Tibial artery (tissue), 4 donors: ENCODE measurements at regions of chr19 and their contacts with region 1.

Region 1: GRCh38 chr19:39846176-39846677 is at the start of gene FBL:
- DNase-seq: peak; percentile 93 to 97
- H3K4me3 ChIP-seq: peak within 1 kb of the TSS; percentile 81 to 93
- H3K27ac ChIP-seq: peak within 1 kb of the TSS; percentile 81 to 91
- H3K4me1 ChIP-seq: peaks cover 0 to 59% (median 29%) of the 10 kb centered on the region in 4 donors
- H3K27me3 ChIP-seq: no peaks in the 10 kb centered on the region
- CTCF ChIP-seq: no peak

Region 2: GRCh38 chr19:39645800-39646411 is 200.3 kb before region 1 on chr19:
- intact Hi-C with region 1: no loop called
- DNase-seq: no peak
- H3K4me3 ChIP-seq: no peak overlapping the region
- H3K27ac ChIP-seq: no peak overlapping the region
- H3K4me1 ChIP-seq: no peaks in the 10 kb centered on the region
- H3K27me3 ChIP-seq: no peaks in the 10 kb centered on the region
- CTCF ChIP-seq: no peak

Region 3: DNA sequence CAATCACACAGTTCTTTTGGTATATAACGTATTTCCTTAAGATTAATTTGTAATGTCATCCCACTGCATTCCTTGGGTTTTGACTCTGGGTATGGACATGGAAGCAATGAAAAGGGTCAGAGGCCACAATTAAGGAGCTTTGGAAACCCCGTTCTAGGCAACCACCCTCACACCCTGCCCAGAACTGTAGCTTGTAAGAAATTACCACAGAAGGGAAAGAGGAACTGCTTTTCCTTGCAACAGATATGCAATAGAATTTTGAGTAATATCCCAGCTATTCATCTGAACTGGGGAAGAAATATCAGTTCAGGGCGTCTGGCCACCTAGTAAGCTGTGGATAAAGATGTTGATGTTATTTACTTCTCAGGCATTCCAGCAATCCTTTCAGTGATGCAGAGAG is 107.4 kb before region 1 on chr19:
- intact Hi-C with region 1: no loop called
- DNase-seq: no peak
- H3K4me3 ChIP-seq: no peak overlapping the region
- H3K27ac ChIP-seq: no peak overlapping the region
- H3K4me1 ChIP-seq: no peaks in the 10 kb centered on the region
- H3K27me3 ChIP-seq: no peaks in the 10 kb centered on the region
- CTCF ChIP-seq: no peak

Region 4: DNA sequence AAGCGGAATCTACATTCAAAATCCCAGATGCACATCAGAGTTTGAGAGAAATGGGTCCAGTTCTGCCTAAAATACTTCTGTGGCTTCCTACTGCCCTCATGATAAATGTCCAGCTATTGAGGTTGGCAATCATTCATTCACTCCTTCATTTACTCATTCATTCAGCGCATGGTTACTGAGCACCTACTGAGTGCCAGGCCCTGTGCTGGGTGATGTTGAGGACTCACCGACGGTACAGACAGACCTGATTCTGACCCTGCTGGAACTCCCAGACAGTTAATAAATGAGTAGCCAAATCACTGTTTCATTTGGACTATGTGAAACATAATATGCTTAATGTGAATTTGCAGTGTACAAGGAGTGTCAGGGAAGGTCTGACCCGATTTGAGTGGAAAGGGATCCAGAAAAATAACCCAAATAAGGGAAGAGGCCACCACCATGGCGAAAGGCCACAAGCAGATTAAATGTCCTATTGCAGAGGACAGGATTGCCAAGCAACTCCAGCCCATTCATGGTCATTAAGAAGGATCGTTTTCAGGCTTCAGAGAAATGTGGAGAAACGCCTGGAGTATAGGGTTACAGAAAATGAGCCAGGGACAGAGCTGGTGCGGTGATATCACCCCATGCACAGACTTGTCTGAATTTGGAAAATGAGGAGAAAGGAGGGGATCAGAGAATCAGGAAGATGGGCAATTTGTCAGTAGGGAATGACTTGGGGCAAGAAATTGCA is 32.8 kb before region 1 on chr19:
- intact Hi-C with region 1: no loop called
- DNase-seq: peak in 1 of 2 donors; percentile 42
- H3K4me3 ChIP-seq: no peak overlapping the region
- H3K27ac ChIP-seq: no peak overlapping the region
- H3K4me1 ChIP-seq: no peaks in the 10 kb centered on the region
- H3K27me3 ChIP-seq: no peaks in the 10 kb centered on the region
- CTCF ChIP-seq: no peak

Region 5: DNA sequence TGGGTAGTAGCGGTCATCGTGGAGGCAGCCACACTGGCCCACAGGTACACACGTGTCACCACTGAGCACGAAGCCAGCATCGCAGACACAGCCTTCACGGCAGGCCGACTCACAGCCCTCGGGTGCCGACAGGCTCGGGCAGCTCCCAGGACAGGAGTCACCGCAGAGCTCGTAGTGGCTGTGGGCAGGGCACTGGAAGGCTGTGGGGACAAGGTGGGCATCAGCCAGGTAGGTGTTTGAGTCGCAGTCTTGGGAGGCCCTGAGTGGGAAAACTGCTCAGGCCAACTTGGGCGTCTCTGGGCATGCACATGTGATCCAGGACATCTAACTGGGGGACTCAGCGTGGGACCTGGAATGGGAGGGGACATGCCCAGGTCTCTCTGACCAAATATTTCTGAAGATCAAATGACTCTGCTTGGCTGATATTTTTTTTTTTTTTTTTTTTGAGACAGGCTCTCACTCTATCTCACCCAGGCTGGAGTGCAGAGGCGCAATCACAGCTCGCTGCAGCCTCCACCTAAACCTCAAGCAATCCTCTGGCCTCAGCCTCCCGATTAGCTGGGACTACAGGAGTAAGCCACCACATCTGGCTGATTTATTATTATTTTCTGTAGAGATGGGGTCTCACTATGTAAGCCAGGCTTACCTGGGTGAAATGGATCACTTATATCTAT is 43.8 kb after region 1 on chr19:
- intact Hi-C with region 1: no loop called
- DNase-seq: peak in 1 of 2 donors; percentile 64
- H3K4me3 ChIP-seq: no peak overlapping the region
- H3K27ac ChIP-seq: no peak overlapping the region
- H3K4me1 ChIP-seq: peaks cover 0 to 6% (median 2%) of the 10 kb centered on the region in 4 donors
- H3K27me3 ChIP-seq: peaks cover 0 to 27% of the 10 kb centered on the region in 2 donors
- CTCF ChIP-seq: no peak

Region 6: GRCh38 chr19:39970675-39971379 is 124.6 kb after region 1 on chr19 and contains the start of gene PSMC4:
- intact Hi-C with region 1: loop called (anchors 5 kb)
- DNase-seq: peak; percentile 98 to 99
- H3K4me3 ChIP-seq: peak within 1 kb of the TSS; percentile 66 to 78
- H3K27ac ChIP-seq: peak within 1 kb of the TSS; percentile 90 to 91
- H3K4me1 ChIP-seq: peaks cover 4 to 21% (median 19%) of the 10 kb centered on the region in 4 donors
- H3K27me3 ChIP-seq: no peaks in the 10 kb centered on the region
- CTCF ChIP-seq: peak; percentile 66 to 69